WTC11 (cell line): ENCODE measurements at regions of chr17 and their contacts with region 1.

Region 1: DNA sequence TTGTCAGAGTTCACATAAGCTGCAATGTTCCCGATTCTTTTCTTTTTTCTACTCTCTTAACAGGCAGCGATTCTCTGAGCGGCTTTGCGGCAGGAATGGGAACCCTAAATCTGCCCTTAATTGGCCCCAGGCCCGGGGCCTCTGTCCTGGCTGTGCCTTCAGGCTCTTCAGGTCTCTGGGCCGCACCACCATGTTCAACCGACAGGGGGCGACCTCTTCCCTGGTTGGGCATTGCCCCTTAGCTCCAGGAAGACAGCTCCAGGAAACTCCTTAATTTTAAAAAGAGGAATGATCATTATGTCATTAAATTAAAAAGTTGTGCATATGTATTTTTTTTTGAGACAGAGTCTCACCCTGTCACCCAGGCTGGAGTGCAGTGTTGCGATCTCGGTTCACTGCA is 20.3 kb downstream of the CACNG5 start:
- DNase-seq: peak; percentile 90
- ATAC-seq: peak; percentile 72
- H3K4me3 Mint-ChIP-seq: no peak overlapping the region
- H3K27ac Mint-ChIP-seq: no peak overlapping the region
- H3K4me1 Mint-ChIP-seq: peaks cover 8% of the 10 kb centered on the region; the same call in 1 of the 2 replicates
- H3K27me3 Mint-ChIP-seq: peaks cover 2% of the 10 kb centered on the region; the same call in 1 of the 2 replicates
- CTCF ChIP-seq: peak; percentile 90

Region 2: DNA sequence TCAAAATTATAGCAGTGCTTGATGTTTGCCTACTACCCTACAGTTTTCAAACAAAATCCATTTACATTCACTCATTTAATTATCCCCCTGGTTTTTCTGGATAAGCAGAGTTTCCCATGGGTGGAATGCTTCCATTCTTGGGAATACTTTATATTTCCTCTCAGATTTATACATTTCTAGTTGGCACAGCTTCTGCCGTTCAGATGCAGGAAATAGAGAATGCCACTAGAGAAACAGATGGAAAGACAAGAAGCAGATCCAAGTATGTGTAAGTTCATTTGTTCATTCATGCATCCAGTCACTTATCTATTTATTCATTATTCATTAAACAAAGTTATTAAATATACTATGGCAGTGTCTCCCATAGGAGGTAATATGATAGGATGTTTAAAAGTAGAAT is 85.3 kb before region 1 on chr17:
- CTCF ChIA-PET with region 1: no interaction called
- POLR2A ChIA-PET with region 1: no interaction called
- DNase-seq: no peak
- ATAC-seq: no peak
- H3K4me3 Mint-ChIP-seq: no peak overlapping the region
- H3K27ac Mint-ChIP-seq: no peak overlapping the region
- H3K4me1 Mint-ChIP-seq: peaks cover 6% of the 10 kb centered on the region
- H3K27me3 Mint-ChIP-seq: no peaks in the 10 kb centered on the region
- CTCF ChIP-seq: no peak

Region 3: DNA sequence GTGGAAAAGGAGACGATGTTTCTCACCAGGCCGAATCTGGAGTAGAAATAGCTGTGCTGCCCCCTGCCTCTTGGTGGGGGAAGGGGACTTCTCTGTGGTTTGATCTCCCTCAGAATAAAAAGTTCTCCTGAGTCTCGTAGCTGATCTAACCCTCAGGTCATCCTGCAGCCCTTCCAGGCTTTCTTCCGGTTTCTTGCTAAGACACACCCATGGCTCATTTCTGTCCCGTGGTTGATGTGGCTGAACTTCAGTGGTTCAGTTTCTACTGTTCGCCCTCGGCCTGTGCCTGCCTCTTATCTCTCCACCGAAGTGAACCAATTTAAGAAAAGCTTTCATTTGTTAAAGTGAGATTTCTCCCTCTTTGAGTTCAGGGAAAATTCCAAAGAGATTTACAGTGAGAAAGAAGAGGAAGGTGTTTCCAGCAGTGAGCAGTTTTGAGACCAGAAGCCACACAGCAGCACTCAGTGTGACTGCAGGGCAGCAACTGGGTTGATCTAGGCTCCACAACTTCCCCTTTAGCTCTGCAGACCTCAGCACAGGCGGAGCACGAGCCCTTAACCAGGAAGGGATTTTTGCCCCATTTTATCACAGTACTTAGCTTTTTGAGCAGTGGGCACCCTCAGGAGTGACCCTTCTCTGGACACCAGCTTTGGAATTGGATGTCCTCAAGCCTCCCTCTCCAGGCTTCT is 55.2 kb before region 1 on chr17:
- CTCF ChIA-PET with region 1: interaction called, 11 read pairs
- POLR2A ChIA-PET with region 1: no interaction called
- DNase-seq: no peak
- ATAC-seq: no peak
- H3K4me3 Mint-ChIP-seq: no peak overlapping the region
- H3K27ac Mint-ChIP-seq: no peak overlapping the region
- H3K4me1 Mint-ChIP-seq: peaks cover 28% of the 10 kb centered on the region
- H3K27me3 Mint-ChIP-seq: no peaks in the 10 kb centered on the region; the same call in 1 of the 2 replicates
- CTCF ChIP-seq: no peak

Region 4: DNA sequence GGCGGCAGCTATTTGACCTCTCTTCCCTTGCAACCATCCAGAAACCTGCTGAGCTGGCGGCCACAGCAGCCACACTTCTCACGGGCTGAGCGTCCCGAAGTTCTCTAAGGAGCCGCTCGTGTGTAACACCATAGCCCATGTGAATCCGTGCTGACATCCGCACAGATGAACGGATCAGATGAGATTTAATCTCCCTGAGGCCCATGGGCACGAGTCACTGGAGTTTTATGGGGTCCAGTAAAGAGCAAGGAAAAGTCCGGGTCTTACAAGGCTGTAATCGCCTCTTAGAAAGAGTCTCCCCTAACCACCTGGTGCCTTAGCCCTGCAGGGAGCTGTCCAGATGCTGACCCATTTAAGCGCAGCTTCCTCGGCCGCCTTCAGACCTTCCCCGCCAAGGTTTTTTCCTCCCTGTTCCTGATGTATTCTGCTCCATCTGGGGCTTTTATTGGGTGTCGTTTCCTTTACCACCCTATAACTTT is 25.8 kb before region 1 on chr17:
- CTCF ChIA-PET with region 1: interaction called, 14 read pairs
- POLR2A ChIA-PET with region 1: no interaction called
- DNase-seq: peak; percentile 74
- ATAC-seq: peak; percentile 94
- H3K4me3 Mint-ChIP-seq: no peak overlapping the region
- H3K27ac Mint-ChIP-seq: no peak overlapping the region; the same call in 1 of the 2 replicates
- H3K4me1 Mint-ChIP-seq: peaks cover 29% of the 10 kb centered on the region
- H3K27me3 Mint-ChIP-seq: peaks cover 14% of the 10 kb centered on the region
- CTCF ChIP-seq: no peak

Region 5: DNA sequence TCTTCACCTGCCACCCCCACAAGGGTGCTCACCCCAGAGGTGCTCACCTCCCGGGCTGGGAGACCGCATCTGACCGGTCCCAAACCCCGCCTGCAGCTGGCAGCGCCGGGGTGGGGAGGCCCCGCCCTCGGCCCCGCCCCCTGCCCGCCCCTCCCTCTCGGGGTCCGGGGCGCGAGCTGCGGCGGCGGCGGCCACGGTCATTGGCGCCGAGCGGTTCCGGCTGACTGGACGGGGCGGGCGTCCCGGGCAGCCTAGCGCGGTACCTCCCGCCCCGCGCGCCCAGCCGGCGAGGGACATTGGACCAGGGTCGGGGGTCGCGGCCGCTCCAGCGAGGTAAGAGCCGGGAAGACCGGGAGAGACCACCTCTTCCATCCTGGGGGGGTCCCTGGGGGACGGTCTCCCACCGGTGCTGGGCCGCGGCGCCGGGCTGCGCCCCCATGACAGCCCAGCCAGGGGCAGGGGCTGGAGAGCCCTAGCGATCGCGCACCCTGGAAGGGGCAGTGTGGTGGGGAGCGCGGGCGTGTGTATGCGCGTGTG is 20.2 kb before region 1 on chr17 and contains the start of gene CACNG5:
- CTCF ChIA-PET with region 1: interaction called, 14 read pairs
- POLR2A ChIA-PET with region 1: no interaction called
- DNase-seq: peak; percentile 69
- ATAC-seq: peak; percentile 91
- H3K4me3 Mint-ChIP-seq: peak within 1 kb of the TSS; percentile 59
- H3K27ac Mint-ChIP-seq: no peak within 1 kb of the TSS
- H3K4me1 Mint-ChIP-seq: peaks cover 13% of the 10 kb centered on the region
- H3K27me3 Mint-ChIP-seq: peaks cover 33% of the 10 kb centered on the region
- CTCF ChIP-seq: no peak
- total RNA-seq, gene CACNG5: 1.9 to 3.1 TPM (median 2.8 TPM) in 3 replicates

Region 6: GRCh38 chr17:66841328-66841727 is 13.9 kb before region 1 on chr17:
- CTCF ChIA-PET with region 1: interaction called, 11 read pairs
- POLR2A ChIA-PET with region 1: no interaction called
- DNase-seq: no peak
- ATAC-seq: peak; percentile 69
- H3K4me3 Mint-ChIP-seq: no peak overlapping the region
- H3K27ac Mint-ChIP-seq: no peak overlapping the region
- H3K4me1 Mint-ChIP-seq: no peaks in the 10 kb centered on the region
- H3K27me3 Mint-ChIP-seq: peaks cover 6% of the 10 kb centered on the region
- CTCF ChIP-seq: no peak

Region 7: DNA sequence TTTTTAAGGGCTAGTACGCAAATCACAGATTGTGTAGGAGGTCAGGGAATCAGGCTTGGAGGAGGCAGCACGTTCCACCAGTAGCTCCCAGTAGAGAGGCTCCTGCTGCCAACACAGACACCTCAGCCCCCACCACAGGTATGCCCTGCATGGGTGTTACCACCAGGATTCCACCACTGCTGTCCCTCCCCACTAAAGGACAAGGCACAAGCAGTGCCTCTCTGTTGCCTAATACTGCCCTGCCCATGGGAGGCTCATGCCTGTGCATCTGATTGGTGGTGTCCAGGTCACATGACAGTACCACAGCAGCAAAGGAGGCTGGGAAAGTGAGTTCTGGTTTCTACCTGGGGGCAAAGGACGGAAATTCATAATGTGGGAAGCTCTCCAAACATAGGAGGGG is 75.7 kb after region 1 on chr17:
- CTCF ChIA-PET with region 1: no interaction called
- POLR2A ChIA-PET with region 1: no interaction called
- DNase-seq: no peak
- ATAC-seq: peak; percentile 93
- H3K4me3 Mint-ChIP-seq: no peak overlapping the region
- H3K27ac Mint-ChIP-seq: no peak overlapping the region
- H3K4me1 Mint-ChIP-seq: no peaks in the 10 kb centered on the region
- H3K27me3 Mint-ChIP-seq: no peaks in the 10 kb centered on the region; the same call in 1 of the 2 replicates
- CTCF ChIP-seq: no peak